ENCODE measurements at regions of chr16 and their contacts with region 1.

Region 1: GRCh38 chr16:71794943-71795342 is 13.7 kb downstream of the AP1G1 start:
- H3K4me3 ChIP-seq: no peak overlapping the region
- H3K27ac ChIP-seq: no peak overlapping the region
- H3K4me1 ChIP-seq: no peaks in the 10 kb centered on the region
- CTCF ChIP-seq: no peak

Region 2: GRCh38 chr16:71493213-71493612 is 301.7 kb before region 1 on chr16:
- CTCF ChIA-PET with region 1: no interaction called
- POLR2A ChIA-PET with region 1: no interaction called
- H3K4me3 ChIP-seq: no peak overlapping the region
- H3K27ac ChIP-seq: no peak overlapping the region
- H3K4me1 ChIP-seq: no peaks in the 10 kb centered on the region
- CTCF ChIP-seq: no peak

Region 3: GRCh38 chr16:71808593-71809459 is 13.9 kb after region 1 on chr16 and contains the start of gene AP1G1:
- CTCF ChIA-PET with region 1: no interaction called
- POLR2A ChIA-PET with region 1: interaction called, 12 read pairs
- H3K4me3 ChIP-seq: peak within 1 kb of the TSS; percentile 87
- H3K27ac ChIP-seq: peak within 1 kb of the TSS; percentile 81
- H3K4me1 ChIP-seq: peaks cover 8% of the 10 kb centered on the region
- CTCF ChIP-seq: peak; percentile 21; the same call in 1 of the 2 replicates

Measured in HEK293 (cell line).